AG04449 (cell line): ENCODE measurements at regions of chr20 and their contacts with region 1.

Region 1: DNA sequence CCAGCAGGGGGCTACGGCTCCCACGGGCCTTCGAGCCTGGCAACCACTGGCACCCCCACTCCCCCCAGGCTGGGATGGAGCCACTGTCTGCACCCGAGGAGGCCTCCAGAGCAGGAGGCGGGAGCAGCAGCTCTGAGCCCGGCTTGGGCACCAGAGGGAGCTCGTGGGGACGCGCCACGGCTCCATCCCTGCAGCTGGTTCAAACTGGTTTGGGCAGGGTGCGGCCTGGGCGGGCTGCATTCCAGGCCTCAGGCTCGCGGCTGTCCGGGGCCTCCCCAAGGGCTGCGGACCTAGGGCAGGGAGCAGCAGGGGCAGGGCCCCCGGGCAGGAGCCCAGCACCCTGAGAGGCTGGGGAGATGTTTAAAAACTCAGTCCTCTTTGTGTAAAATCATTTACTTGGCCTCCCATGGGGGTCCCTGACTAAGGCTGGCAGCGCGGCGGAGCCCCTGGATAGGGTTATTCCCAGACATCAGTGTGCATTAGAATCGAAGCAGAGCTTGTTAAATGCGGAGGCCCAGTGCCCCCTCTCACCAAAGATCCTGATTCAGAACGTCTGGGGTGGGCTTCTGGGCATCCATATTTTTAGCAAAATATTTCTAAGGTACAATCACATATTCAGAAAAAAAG is 4.1 kb upstream of the BCAS4 start:
- DNase-seq: no peak
- H3K4me3 ChIP-seq: no peak overlapping the region
- CTCF ChIP-seq: peak; percentile 99

Region 2: DNA sequence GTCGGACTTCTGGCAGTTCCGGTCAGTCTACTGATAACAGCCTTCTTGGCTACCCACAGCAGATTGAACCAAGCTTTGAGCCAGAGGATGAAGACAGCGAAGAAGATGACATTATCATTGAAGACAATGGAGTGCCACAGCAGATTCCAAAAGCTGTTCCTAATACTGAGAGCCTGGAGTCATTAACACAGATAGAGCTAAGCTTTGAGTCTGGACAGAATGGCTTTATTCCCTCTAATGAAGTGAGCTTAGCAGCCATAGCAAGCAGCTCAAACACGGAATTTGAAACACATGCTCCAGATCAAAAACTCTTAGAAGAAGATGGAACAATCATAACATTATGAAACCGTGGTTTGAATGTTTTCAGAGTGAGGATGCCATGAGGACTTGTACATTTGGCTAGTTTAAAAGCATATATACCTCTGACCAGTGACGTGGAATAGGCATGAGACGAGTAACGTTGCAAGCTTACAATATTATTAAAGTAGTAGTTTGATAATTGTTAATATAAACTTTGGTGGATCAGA is 40.6 kb before region 1 on chr20:
- CTCF ChIA-PET with region 1: interaction called, 10 read pairs
- POLR2A ChIA-PET with region 1: no interaction called
- DNase-seq: no peak
- H3K4me3 ChIP-seq: no peak overlapping the region
- CTCF ChIP-seq: no peak

Region 3: GRCh38 chr20:50804418-50805064 is 13.8 kb after region 1 on chr20:
- CTCF ChIA-PET with region 1: interaction called, 42 read pairs
- POLR2A ChIA-PET with region 1: no interaction called
- DNase-seq: no peak
- H3K4me3 ChIP-seq: no peak overlapping the region
- CTCF ChIP-seq: no peak

Region 4: DNA sequence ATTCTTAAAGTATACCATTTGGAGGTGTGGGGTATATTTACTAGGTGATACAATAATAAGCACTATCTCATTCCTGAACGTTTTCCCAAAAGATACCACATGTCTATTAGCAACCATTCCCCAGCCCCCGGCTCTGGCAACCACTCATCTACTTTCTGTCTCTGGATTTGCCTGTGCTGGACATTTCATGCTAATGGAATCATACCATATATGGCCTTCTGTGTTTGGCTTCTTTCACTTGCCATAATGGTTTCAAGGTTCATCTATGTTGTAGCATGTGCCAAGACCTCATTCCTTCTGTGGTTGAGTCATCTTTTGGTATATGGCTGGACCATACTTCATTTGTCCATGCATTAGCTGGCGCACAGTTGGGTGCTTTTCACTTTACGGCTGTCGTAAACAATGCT is 43.8 kb after region 1 on chr20:
- CTCF ChIA-PET with region 1: interaction called, 12 read pairs
- POLR2A ChIA-PET with region 1: no interaction called
- DNase-seq: peak; percentile 94
- H3K4me3 ChIP-seq: no peak overlapping the region
- CTCF ChIP-seq: no peak

Region 5: GRCh38 chr20:50943069-50943468 is 152.3 kb after region 1 on chr20:
- CTCF ChIA-PET with region 1: interaction called, 18 read pairs
- POLR2A ChIA-PET with region 1: no interaction called
- DNase-seq: no peak
- H3K4me3 ChIP-seq: no peak overlapping the region
- CTCF ChIP-seq: no peak

Region 6: DNA sequence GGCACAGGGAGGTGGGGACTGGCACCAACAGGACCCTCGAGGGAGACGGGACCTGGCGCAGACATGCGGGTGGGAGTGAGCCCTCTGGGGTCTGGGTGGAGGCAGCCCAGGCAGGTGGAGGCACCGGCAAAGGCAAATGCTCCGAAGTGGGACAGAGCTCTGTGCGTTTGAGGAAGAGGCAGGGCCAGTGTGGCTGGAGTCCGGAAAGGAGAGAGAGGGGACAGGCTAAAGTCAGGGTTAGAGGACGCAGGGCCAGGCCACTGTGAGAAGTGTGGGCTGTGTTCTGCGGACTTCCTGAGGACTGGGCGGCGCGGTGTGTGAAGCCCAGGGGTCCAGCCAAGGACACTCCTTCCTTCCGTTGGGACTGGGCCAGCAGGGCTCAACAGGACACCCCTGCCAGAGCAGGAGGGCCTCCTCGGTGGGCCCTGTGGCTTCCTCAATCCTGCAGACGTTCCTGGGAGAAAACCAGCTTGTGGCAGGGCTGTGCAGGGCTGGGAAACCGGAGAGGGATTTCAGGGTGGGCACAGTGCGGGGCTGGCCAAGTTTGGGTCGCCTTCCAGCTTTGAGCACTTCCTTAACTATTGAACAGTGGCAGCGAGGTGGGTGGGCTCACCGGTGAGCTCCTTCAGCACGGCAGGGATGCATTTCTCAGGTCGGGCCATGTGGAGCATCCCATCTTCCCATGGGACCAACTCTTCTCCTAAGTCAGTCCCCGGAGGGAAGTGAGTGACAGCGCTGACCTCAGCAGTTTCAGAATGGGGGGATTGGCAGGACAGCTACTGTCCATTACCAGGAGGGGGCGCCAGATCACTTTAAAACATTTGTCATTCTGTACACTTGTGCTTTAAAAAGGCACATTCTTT is 190.3 kb after region 1 on chr20:
- CTCF ChIA-PET with region 1: interaction called, 111 read pairs
- POLR2A ChIA-PET with region 1: interaction called, 6 read pairs
- DNase-seq: no peak
- H3K4me3 ChIP-seq: no peak overlapping the region
- CTCF ChIP-seq: peak; percentile 77

Region 7: DNA sequence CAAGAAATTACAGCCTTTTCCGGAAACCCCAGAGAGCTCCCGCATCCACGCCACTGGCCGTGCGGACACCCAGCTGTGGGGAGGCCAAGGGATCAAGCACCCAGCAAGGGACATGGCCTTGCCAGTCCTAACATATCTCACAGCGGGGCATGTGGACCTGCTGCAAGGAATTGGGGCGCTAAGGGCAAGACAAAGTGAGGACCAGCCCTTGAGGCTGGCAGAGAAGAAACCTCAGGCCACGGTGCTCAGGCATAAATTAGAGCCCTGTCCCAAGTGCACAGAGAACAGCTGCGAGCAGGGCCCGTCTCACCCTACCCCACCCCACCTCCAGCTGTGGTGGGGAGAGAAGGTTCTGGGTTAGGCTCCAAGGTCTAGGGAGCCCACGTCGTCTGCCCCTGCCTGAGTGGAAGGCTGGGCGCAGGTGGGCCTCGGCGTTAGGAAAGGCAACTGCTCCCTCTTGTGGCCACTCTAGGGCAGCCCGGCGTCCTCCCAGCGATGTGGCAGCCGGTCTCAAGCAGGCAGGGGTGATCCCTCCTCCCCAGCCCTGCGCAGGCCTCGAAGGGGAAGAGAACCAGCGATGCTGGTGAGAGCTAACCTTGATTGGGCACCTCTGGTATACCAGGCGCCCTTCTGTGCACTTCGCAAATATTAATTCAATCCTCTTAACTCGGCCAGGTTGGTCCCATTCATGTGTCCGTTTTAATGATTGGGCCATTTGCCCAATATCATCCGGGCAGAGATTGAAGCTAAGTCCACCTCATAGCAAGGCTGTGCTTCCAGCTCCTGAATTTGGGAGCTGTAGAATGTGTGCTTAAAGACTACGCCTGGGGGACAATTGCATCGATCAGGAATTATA is 516.0 kb after region 1 on chr20:
- CTCF ChIA-PET with region 1: interaction called, 11 read pairs
- POLR2A ChIA-PET with region 1: no interaction called
- DNase-seq: no peak
- H3K4me3 ChIP-seq: no peak overlapping the region
- CTCF ChIP-seq: peak; percentile 98